Cardiac septum (tissue), 1 donor: ENCODE measurements at regions of chr14 and their contacts with region 1.

Region 1: DNA sequence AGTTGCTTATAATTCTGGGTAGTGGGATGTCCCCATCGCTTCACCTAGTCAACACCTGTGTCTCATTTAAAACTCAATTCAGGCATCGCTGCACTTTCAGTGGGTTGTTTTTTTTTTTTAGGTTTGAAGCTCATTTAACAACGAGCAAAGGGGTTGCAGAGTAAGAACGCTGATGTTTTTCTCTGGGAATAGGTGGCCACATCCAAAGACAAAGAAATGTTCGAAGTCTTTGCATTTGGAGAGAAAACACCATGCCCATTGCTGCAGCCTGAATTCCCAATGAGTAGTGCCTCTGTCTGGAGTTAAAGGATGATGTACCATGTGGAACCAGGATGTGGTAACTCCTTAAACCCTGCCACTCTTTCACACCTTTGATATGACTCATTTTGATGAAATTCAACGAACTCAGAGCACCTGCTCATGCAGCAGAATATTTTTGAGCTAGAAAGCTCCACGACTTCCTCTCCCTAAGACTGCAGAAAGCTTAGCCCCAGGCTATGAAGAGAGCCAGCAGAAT is 35.1 kb upstream of the BATF start:
- DNase-seq: no peak

Region 2: DNA sequence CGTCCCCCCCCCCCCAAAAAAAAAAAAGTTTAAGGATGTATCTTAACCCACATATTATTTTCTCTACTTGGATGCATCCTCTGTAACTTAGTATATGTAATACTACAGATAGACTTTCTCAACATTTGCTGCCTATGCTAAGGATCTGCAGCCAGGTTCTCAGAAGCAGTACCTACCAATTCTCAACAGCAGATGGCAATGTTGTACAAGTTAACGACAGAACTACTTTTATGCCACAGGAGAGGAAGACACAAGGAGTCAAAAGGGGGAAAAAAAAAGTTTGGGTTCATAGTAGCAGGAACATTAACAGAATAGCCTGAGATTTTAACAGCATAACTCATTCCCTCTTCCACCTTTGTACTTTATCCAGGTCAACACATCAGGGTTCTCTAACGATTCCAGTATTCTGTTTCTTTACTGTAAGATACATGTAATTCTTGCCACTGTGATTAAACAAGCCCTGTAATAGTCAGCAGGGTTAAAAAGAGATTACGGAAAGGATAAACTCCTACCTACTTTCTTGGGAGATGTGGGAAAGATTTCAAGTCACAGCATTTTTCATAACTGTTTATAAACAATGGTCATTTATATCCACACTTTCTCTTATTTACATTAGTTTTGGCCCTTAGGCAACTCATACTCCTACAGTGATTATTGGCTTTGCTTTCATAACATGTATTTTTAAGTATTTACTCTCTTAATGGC is 354.7 kb before region 1 on chr14:
- intact Hi-C with region 1: loop called (anchors 5 kb)
- DNase-seq: no peak

Region 3: GRCh38 chr14:75968456-75968855 is 481.2 kb after region 1 on chr14:
- intact Hi-C with region 1: no loop called
- DNase-seq: no peak